Ascending aorta (tissue), 2 donors: ENCODE measurements at regions of chr5 and their contacts with region 1.

Region 1: GRCh38 chr5:90386099-90386710 is 23.4 kb downstream of the CETN3 start:
- DNase-seq: no peak
- H3K4me3 ChIP-seq: no peak overlapping the region
- H3K27ac ChIP-seq: no peak overlapping the region
- H3K4me1 ChIP-seq: no peaks in the 10 kb centered on the region
- H3K27me3 ChIP-seq: no peaks in the 10 kb centered on the region
- CTCF ChIP-seq: peak; percentile 35 to 62 (median 41)

Region 2: DNA sequence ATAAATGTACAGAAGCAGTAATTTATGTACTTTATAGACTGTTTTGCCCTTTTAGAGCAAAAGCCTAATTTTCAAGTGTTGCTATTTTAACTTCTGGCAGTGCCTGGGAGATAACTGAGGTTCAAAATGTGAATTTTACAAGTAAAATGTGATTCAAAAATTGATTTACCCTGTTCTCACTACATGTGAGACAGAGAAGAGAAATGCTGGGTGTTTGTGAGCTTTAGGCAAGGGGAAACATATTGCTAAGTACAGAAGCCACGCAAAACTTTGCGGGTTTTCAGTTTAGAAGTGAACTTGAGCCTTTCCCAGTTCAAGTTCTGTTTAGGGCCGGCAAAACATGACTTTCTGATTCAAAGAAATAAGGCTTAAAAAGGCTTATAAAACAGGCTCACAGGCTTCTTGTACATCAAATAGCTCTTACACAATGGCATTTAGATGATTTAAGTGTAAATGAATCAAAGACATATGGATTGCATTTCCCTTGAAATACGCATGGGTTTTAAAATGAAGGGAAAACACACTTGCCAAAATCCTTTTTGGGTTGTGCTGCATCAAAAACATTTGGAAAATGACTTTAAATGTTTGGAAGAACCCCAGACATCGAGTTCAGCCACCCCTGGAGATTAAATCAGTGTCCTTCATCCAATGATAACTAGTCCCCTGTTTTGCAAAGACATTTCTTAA is 1132.4 kb before region 1 on chr5:
- intact Hi-C with region 1: loop called (anchors 5 kb)
- DNase-seq: no peak
- H3K4me3 ChIP-seq: peak overlapping the region in 1 of 2 donors; percentile 6
- H3K27ac ChIP-seq: peak overlapping the region in 1 of 2 donors; percentile 48
- H3K4me1 ChIP-seq: no peaks in the 10 kb centered on the region
- H3K27me3 ChIP-seq: no peaks in the 10 kb centered on the region
- CTCF ChIP-seq: no peak

Region 3: DNA sequence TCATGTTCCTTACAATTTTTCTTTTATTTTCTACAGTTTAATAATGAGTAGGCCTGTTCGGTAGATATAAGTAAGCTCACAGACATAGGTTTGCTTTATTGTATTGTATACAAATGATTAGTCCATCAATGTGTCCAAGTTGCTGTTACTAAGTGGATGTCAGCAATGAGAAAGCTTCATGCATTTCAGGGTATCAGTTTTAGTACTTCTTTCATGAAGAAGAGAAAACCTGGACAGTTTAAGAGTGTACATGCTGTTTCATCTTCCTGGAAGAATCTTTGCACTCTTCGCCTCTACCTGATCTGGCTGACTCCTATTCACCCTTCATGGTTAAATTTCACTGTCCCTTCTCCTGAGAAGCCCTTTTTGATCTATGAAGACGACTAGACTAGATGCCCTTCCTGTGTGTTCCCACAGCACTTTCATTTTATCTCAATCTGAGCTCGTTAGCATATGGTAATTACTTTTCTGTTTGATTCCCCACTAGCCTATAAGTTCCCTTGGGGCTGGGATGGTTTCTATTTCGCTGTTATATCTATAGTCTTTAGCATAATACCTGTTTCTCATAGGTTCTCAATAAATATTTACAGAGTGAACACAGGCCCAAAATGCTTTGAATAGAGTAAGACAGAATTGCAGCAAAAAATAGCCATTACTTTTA is 47.4 kb before region 1 on chr5:
- intact Hi-C with region 1: no loop called
- DNase-seq: no peak
- H3K4me3 ChIP-seq: no peak overlapping the region
- H3K27ac ChIP-seq: no peak overlapping the region
- H3K4me1 ChIP-seq: no peaks in the 10 kb centered on the region
- H3K27me3 ChIP-seq: no peaks in the 10 kb centered on the region
- CTCF ChIP-seq: no peak